Activated CD4-positive, alpha-beta memory T cell treated with anti-CD3 and anti-CD28 coated beads for 36 hours (primary cell): ENCODE measurements at regions of chr12 and their contacts with region 1.

Region 1: GRCh38 chr12:57063991-57064685 is 14.2 kb upstream of the MYO1A start:
- DNase-seq: peak; percentile 58
- H3K4me3 Mint-ChIP-seq: peak overlapping the region; percentile 67
- H3K27ac Mint-ChIP-seq: peak overlapping the region; percentile 98
- H3K4me1 Mint-ChIP-seq: peaks cover 53% of the 10 kb centered on the region
- H3K27me3 Mint-ChIP-seq: no peaks in the 10 kb centered on the region

Region 2: GRCh38 chr12:56751712-56752598 is 312.2 kb before region 1 on chr12 and contains the start of gene PRIM1:
- CTCF ChIA-PET with region 1: interaction called, 6 read pairs
- POLR2A ChIA-PET with region 1: no interaction called
- intact Hi-C with region 1: loop called (anchors 1 kb)
- DNase-seq: peak; percentile 94
- H3K4me3 Mint-ChIP-seq: peak within 1 kb of the TSS; percentile 99
- H3K27ac Mint-ChIP-seq: peak within 1 kb of the TSS; percentile 99
- H3K4me1 Mint-ChIP-seq: peaks cover 32% of the 10 kb centered on the region
- H3K27me3 Mint-ChIP-seq: no peaks in the 10 kb centered on the region
- total RNA-seq, gene PRIM1: 74.5 to 75.3 TPM

Region 3: DNA sequence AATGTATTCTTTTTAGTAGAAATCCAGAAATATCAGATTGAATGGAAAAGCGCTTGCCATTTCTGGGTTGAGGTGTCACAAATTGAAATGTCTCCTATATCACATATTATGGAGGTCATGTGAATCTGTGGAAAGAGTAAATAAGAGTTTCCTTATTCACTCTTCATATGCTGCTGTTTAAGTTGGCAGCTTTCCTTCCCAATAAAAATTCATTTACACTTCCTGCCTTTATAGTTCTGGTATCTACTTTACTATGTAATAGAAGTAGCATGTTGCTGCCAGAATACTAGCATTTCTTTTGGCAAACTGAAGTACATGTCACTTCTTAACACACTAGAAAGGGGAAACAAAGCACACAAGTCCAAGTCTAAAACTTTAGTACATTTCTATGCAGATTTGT is 190.8 kb before region 1 on chr12:
- CTCF ChIA-PET with region 1: no interaction called
- POLR2A ChIA-PET with region 1: no interaction called
- intact Hi-C with region 1: no loop called
- DNase-seq: no peak
- H3K4me3 Mint-ChIP-seq: no peak overlapping the region
- H3K27ac Mint-ChIP-seq: no peak overlapping the region
- H3K4me1 Mint-ChIP-seq: no peaks in the 10 kb centered on the region
- H3K27me3 Mint-ChIP-seq: peaks cover 19% of the 10 kb centered on the region

Region 4: GRCh38 chr12:57031138-57031725 is 32.9 kb before region 1 on chr12:
- CTCF ChIA-PET with region 1: interaction called, 11 read pairs
- POLR2A ChIA-PET with region 1: interaction called, 3 read pairs
- intact Hi-C with region 1: no loop called
- DNase-seq: peak; percentile 35
- H3K4me3 Mint-ChIP-seq: no peak overlapping the region
- H3K27ac Mint-ChIP-seq: no peak overlapping the region
- H3K4me1 Mint-ChIP-seq: peaks cover 35% of the 10 kb centered on the region
- H3K27me3 Mint-ChIP-seq: no peaks in the 10 kb centered on the region

Region 5: GRCh38 chr12:57046947-57047890 is 16.9 kb before region 1 on chr12:
- CTCF ChIA-PET with region 1: interaction called, 42 read pairs
- POLR2A ChIA-PET with region 1: no interaction called
- intact Hi-C with region 1: loop called (anchors 2 kb)
- DNase-seq: peak; percentile 83
- H3K4me3 Mint-ChIP-seq: peak overlapping the region; percentile 28
- H3K27ac Mint-ChIP-seq: peak overlapping the region; percentile 65
- H3K4me1 Mint-ChIP-seq: peaks cover 21% of the 10 kb centered on the region
- H3K27me3 Mint-ChIP-seq: no peaks in the 10 kb centered on the region

Region 6: DNA sequence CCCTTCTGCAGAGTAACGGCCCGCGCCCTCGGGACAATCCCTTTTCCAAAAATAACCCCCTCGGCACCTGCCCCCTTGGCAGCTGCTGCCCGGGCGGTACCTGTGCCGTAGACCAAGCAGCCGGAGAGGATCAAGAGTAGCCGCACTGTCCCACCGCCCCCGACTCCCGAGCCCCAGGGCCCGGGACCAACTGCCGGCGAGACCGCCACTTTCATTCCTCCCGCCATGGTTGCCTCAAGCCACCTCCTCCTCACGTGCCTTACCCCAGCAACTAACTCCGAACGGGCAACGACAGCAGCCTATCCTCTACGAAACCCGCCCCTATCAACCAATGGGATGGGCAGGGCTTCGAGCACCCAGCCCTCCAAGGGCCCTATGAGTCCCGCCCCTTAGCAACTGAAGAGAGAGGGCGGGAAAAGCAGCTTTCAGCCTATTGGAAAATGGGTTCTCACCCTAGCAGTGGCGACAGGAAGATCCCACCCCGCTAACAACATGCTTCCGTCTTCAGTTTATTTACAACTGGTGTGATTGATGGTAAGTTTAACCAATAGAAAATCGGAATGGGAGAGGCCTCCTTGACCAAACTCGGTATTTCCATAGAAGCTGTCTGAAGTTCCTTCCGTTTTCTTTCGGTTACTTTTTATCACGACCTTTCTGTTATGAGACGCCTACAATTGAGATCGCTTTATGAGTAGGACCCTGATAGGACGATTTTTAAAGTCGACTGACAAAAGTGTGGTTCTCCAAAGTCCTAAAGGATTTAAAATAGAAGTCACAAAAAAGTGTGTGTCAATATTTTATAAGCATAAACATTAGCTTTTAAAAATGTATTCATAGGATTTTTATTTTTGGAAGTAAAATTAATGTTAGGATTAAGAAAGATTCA is 14.6 kb after region 1 on chr12 and contains the start of gene NEMP1:
- CTCF ChIA-PET with region 1: interaction called, 56 read pairs
- POLR2A ChIA-PET with region 1: interaction called, 16 read pairs
- intact Hi-C with region 1: loop called (anchors 1 kb)
- DNase-seq: peak; percentile 98
- H3K4me3 Mint-ChIP-seq: peak within 1 kb of the TSS; percentile 99
- H3K27ac Mint-ChIP-seq: peak within 1 kb of the TSS; percentile 97
- H3K4me1 Mint-ChIP-seq: peaks cover 36% of the 10 kb centered on the region
- H3K27me3 Mint-ChIP-seq: no peaks in the 10 kb centered on the region
- total RNA-seq, gene NEMP1: 70.6 to 73.5 TPM

Region 7: DNA sequence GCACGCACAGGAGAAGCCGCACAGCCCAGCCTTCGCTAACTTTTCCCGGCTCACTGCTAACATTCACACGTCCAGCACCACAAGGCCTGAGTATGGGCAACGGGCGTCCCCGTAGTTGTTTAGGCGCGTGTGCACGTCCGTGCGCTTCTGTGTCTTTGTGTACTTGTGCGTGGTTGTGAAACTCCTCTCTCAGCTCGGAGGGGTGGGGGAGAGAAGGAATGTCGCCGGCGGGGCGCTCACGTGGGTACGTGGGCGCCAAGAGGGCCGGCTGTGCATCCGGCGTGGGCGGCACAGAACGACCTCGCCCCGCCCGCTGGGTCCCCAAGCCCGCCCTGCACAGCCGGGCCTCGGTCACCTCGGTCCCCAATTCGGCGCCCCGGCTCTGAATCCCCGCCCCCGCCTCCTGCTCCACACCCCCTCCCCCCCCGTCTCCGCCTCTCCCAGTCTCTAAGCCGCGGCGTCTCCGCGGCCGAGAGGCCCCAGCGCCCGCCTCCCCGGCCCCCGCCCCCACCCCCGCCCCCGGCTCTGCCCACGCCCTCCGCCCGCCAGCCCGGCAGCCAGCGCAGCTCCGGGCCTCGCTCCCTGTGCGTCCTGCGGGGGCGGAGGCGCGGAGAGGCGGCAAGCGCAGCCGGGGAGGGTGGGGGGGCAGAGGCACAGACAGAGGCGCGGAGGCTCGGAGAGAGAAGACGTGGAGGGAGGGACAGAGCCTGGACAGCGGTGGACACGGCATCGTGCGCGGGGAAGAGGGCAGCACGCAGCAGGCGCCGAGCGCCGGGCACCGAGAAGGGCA is 24.5 kb after region 1 on chr12 and contains the start of gene NAB2:
- CTCF ChIA-PET with region 1: interaction called, 251 read pairs
- POLR2A ChIA-PET with region 1: interaction called, 6 read pairs
- intact Hi-C with region 1: loop called (anchors 1 kb)
- DNase-seq: peak; percentile 92
- H3K4me3 Mint-ChIP-seq: peak within 1 kb of the TSS; percentile 91
- H3K27ac Mint-ChIP-seq: peak within 1 kb of the TSS; percentile 95
- H3K4me1 Mint-ChIP-seq: peaks cover 61% of the 10 kb centered on the region
- H3K27me3 Mint-ChIP-seq: no peaks in the 10 kb centered on the region
- total RNA-seq, gene NAB2: 39.6 to 41.6 TPM

Region 8: GRCh38 chr12:57124259-57124877 is 60.2 kb after region 1 on chr12:
- CTCF ChIA-PET with region 1: interaction called, 25 read pairs
- POLR2A ChIA-PET with region 1: interaction called, 4 read pairs
- intact Hi-C with region 1: no loop called
- DNase-seq: peak; percentile 83
- H3K4me3 Mint-ChIP-seq: no peak overlapping the region
- H3K27ac Mint-ChIP-seq: no peak overlapping the region
- H3K4me1 Mint-ChIP-seq: peaks cover 11% of the 10 kb centered on the region
- H3K27me3 Mint-ChIP-seq: peaks cover 6% of the 10 kb centered on the region

Region 9: DNA sequence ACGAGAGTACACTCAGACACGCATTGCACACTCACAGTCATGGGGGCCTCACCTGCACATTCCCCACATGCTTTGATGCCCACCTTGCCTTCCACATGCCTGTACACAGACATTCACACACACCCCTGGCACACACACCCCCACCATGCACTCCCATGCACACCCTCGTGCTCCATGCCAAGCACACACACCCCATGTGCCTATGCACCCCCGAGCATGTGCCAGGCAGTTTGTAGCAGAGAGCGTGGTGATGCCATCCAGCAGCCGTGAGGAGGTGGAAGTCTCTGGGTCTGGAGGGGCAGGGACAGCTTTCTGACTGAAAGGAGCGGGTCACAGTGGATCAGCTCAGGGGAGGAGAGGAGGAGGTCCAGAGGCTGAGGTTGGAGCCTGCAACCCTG is 141.8 kb after region 1 on chr12:
- CTCF ChIA-PET with region 1: no interaction called
- POLR2A ChIA-PET with region 1: no interaction called
- intact Hi-C with region 1: no loop called
- DNase-seq: no peak
- H3K4me3 Mint-ChIP-seq: no peak overlapping the region
- H3K27ac Mint-ChIP-seq: no peak overlapping the region
- H3K4me1 Mint-ChIP-seq: no peaks in the 10 kb centered on the region
- H3K27me3 Mint-ChIP-seq: no peaks in the 10 kb centered on the region